Activated naive CD4-positive, alpha-beta T cell treated with anti-CD3 and anti-CD28 coated beads for 36 hours (primary cell): ENCODE measurements at regions of chr18 and their contacts with region 1.

Region 1: GRCh38 chr18:5073026-5073944 is 123.8 kb downstream of the AKAIN1 start:
- DNase-seq: peak; percentile 34
- H3K4me3 Mint-ChIP-seq: no peak overlapping the region
- H3K27ac Mint-ChIP-seq: no peak overlapping the region
- H3K4me1 Mint-ChIP-seq: peaks cover 3% of the 10 kb centered on the region
- H3K27me3 Mint-ChIP-seq: no peaks in the 10 kb centered on the region

Region 2: GRCh38 chr18:5106730-5107129 is 33.4 kb after region 1 on chr18:
- CTCF ChIA-PET with region 1: interaction called, 5 read pairs
- intact Hi-C with region 1: loop called (anchors 1 kb)
- DNase-seq: no peak
- H3K4me3 Mint-ChIP-seq: no peak overlapping the region
- H3K27ac Mint-ChIP-seq: no peak overlapping the region
- H3K4me1 Mint-ChIP-seq: peaks cover 5% of the 10 kb centered on the region
- H3K27me3 Mint-ChIP-seq: no peaks in the 10 kb centered on the region

Region 3: DNA sequence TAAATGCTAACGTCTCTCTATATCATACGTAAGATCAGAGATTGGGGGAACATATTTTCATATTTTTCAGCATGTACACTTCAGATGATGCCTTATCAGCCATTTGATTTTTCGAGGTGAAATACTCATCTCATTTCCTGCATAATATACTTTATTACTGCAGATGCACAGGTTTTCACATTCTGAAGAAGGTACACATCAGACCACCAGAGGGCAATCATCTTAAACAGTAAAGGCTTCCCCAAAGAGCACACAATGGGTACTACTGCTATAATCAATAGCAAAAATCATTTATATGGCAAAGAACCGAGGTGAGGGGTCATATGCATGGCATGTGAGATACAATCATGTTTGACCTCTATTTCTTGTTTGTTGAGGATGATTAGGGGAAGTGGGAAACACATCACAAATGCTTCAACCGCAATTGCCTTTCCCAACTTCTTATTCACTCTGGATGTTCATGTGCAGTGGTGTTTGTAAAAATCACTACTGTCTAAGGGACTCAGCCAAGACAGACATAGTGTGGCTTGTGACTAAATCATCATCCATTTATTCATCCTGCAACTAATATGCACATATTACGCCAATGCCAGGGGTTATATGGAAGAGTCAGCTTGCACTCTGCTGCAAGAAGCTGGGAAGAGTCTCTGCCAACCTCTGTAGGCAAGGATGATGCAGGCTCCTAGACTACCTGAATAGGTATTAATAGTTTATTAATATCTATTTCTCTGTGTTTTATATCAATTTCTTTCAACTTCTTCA is 351.8 kb after region 1 on chr18:
- CTCF ChIA-PET with region 1: no interaction called
- intact Hi-C with region 1: loop called (anchors 5 kb)
- DNase-seq: peak; percentile 22
- H3K4me3 Mint-ChIP-seq: no peak overlapping the region
- H3K27ac Mint-ChIP-seq: no peak overlapping the region
- H3K4me1 Mint-ChIP-seq: no peaks in the 10 kb centered on the region
- H3K27me3 Mint-ChIP-seq: peaks cover 5% of the 10 kb centered on the region

Region 4: DNA sequence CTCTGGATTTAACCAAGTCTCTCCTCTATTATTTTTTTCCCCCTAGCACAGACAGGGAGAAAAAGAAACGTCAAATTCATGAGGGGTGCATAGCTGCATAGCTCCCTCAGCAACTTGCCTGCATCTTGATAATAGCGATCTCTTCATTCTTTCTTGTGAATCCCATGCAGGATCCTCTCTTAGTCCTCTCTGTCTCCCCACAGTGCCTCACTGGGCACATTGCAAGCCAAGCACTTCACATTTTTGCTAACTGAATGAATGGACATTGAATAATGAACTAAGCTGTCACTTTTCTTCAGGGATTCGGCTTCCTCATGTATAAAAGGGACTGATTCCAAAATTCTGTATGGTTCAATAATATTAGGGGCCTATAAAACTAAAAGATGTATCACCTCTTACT is 473.4 kb after region 1 on chr18:
- CTCF ChIA-PET with region 1: no interaction called
- intact Hi-C with region 1: loop called (anchors 2 kb)
- DNase-seq: peak; percentile 11
- H3K4me3 Mint-ChIP-seq: no peak overlapping the region
- H3K27ac Mint-ChIP-seq: no peak overlapping the region
- H3K4me1 Mint-ChIP-seq: peaks cover 8% of the 10 kb centered on the region
- H3K27me3 Mint-ChIP-seq: peaks cover 36% of the 10 kb centered on the region

Region 5: DNA sequence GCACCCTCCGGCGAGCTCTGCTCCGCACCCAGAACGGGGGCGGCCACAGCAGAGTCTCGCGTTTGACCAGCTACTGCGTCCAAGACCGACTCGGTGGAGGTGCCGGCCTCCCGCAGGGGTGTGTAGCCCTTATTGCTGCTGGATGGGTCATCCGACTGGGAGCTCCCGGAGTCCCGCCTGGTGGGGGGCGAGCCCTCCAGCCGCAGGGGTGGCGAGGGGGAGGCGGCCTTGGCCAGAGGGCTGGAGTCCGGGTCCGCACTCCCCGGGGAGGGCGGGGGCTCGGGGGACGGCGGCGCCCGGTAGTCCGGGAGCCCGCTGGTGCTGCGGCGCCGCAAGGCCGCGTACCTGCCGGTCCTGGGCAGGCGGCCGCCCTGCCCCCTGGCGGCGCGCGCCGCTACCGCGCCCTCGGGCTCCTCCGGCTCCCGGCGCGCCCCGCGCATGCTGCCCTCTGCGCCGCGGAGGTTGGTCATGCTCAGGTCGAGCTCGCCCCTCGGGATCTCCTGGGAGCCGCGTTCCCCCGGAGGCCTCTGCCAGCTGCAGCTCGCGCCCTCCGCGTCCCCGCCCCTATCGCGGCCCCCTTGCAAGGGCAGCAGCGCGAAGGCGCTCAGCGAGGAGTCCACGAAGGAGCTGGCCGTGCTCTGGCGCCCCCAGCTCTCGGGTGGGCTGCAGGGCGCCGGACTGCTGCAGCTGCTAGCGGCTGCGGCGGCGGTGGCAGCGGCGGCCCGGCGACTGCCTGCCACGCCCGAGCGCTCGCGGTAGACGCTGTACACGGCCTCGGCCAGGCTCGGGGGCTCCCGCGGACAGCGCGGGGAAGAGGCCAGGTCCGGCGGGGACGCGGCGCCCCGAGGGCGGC is 817.3 kb after region 1 on chr18:
- CTCF ChIA-PET with region 1: no interaction called
- intact Hi-C with region 1: loop called (anchors 2 kb)
- DNase-seq: peak; percentile 25
- H3K4me3 Mint-ChIP-seq: no peak overlapping the region
- H3K27ac Mint-ChIP-seq: no peak overlapping the region
- H3K4me1 Mint-ChIP-seq: peaks cover 7% of the 10 kb centered on the region
- H3K27me3 Mint-ChIP-seq: peaks cover 52% of the 10 kb centered on the region